Naive thymus-derived CD4-positive, alpha-beta T cell (primary cell): ENCODE measurements at regions of chr3 and their contacts with region 1.

Region 1: GRCh38 chr3:52056968-52057805 is 816 bp upstream of the DUSP7 start:
- DNase-seq: peak; percentile 90 to 100 (median 99)
- ATAC-seq: peak; percentile 93
- H3K4me3 ChIP-seq: peak overlapping the region; percentile 92
- H3K4me3 Mint-ChIP-seq: peak overlapping the region; percentile 90 to 97 (median 94)
- H3K27ac ChIP-seq: peak overlapping the region; percentile 79
- H3K27ac Mint-ChIP-seq: peak overlapping the region; percentile 78 to 97 (median 93)
- H3K4me1 ChIP-seq: peaks cover 34 to 35% of the 10 kb centered on the region in 2 donors
- H3K4me1 Mint-ChIP-seq: peaks cover 26 to 39% (median 26%) of the 10 kb centered on the region in 7 donors
- H3K27me3 ChIP-seq: no peaks in the 10 kb centered on the region
- H3K27me3 Mint-ChIP-seq: peaks cover 0 to 4% (median 0%) of the 10 kb centered on the region in 5 donors

Region 2: DNA sequence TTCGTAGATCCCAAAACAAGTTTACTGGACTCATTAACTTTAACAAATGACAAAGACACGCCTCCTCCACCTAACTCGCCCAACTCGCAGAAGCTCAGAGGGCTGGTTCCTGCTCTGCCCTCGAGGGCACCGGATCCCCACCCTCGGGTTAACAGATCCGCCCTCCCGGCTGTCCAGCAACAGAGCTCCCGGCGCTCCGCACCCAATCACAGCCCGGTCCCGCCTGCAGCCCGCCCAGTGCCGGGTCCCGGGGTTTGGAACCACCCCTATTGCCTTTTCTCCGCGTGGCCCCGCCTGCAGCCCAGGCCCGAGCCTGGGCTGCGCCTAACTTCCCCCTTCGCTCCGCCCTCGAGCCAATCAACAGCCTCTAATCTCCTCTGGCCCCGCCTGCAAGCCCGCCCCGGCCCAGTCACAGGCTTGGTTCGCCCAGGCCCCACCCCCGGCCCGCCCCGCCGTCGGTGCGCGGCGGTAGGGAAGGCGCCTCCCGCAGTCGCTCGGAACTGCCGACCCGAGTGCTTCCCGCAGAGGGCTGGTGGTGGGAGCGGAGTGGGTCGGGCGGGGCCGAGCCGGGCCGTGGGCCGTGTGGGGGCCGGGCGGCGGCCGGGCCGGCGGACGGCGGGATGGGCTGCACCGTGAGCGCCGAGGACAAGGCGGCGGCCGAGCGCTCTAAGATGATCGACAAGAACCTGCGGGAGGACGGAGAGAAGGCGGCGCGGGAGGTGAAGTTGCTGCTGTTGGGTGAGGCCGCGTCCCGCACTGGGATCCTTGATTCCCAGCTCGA is 1821.3 kb before region 1 on chr3 and contains the start of gene GNAI2:
- CTCF ChIA-PET with region 1: no interaction called
- POLR2A ChIA-PET with region 1: no interaction called
- intact Hi-C with region 1: loop called (anchors 2 to 5 kb)
- DNase-seq: peak; percentile 95 to 99 (median 99)
- ATAC-seq: peak; percentile 93
- H3K4me3 ChIP-seq: peak within 1 kb of the TSS; percentile 90
- H3K4me3 Mint-ChIP-seq: peak within 1 kb of the TSS; percentile 92 to 99 (median 98)
- H3K27ac ChIP-seq: peak within 1 kb of the TSS; percentile 84
- H3K27ac Mint-ChIP-seq: peak within 1 kb of the TSS; percentile 87 to 97 (median 95)
- H3K4me1 ChIP-seq: peaks cover 30 to 35% of the 10 kb centered on the region in 2 donors
- H3K4me1 Mint-ChIP-seq: peaks cover 12 to 41% (median 37%) of the 10 kb centered on the region in 7 donors
- H3K27me3 ChIP-seq: no peaks in the 10 kb centered on the region
- H3K27me3 Mint-ChIP-seq: no peaks in the 10 kb centered on the region
- total RNA-seq, gene GNAI2: 225 to 442 (median 282) TPM

Region 3: DNA sequence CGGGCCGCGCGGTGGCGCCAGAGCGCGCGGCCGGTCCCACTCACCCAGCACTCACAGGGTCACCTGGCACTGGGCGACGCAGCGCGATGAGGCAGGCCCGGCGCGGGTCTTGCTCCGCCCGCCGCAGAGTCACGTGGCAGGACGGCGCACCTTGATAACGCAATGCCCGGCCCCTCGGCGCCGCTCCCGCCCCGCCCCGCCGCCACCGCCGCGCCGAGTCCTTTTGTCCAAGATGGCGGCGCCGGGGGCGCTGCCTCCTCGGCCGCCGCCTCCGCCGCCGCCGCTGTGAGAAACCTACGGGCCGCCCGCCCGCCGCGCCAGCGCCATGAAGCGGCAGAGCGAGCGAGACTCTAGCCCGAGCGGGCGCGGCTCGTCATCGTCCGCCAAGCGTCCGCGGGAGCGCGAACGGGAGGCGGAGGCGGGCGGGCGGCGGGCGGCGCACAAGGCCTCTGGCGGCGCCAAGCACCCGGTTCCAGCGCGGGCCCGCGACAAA is 666.1 kb before region 1 on chr3 and contains the start of gene RBM15B:
- CTCF ChIA-PET with region 1: no interaction called
- POLR2A ChIA-PET with region 1: no interaction called
- intact Hi-C with region 1: loop called in 1 of 2 experiments (anchors 5 kb)
- DNase-seq: peak; percentile 94 to 98 (median 96)
- ATAC-seq: peak; percentile 95
- H3K4me3 ChIP-seq: peak within 1 kb of the TSS; percentile 52
- H3K4me3 Mint-ChIP-seq: peak within 1 kb of the TSS; percentile 76 to 89 (median 83)
- H3K27ac ChIP-seq: peak within 1 kb of the TSS; percentile 90
- H3K27ac Mint-ChIP-seq: peak within 1 kb of the TSS; percentile 79 to 91 (median 88)
- H3K4me1 ChIP-seq: peaks cover 46 to 53% of the 10 kb centered on the region in 2 donors
- H3K4me1 Mint-ChIP-seq: peaks cover 35 to 75% (median 67%) of the 10 kb centered on the region in 7 donors
- H3K27me3 ChIP-seq: no peaks in the 10 kb centered on the region
- H3K27me3 Mint-ChIP-seq: no peaks in the 10 kb centered on the region
- total RNA-seq, gene RBM15B: 29.9 to 40.6 (median 31.3) TPM

Region 4: DNA sequence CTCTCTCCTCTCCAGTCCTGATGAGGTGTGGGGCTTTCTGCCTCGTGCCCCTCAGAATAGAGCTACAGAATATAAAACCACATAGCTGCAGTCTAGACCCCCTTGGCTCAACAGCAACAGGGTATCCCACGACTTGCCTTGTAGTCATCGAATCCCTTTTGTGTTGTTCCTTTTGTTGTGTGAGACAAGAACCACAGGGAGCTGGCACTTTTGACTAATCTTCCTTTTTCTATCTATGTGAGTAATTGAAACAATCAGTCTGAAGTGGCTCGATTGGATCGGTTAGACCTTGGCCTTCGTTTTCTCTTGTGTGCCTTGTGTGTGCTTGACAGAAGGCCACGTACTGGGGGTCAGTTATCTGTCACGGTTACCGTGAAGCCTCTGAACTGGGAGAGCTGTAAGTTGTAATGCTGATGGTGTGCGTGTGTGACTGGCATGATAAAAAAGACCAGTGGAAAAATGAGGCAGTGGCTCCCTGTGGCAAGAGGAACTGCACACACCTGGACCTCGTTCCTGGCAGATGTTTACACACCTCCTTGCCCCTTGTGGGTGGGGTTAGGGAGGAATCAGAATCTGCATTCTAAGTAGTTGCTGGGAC is 255.0 kb before region 1 on chr3:
- CTCF ChIA-PET with region 1: no interaction called
- POLR2A ChIA-PET with region 1: no interaction called
- intact Hi-C with region 1: no loop called
- DNase-seq: no peak
- ATAC-seq: no peak
- H3K4me3 ChIP-seq: no peak overlapping the region
- H3K4me3 Mint-ChIP-seq: no peak overlapping the region
- H3K27ac ChIP-seq: no peak overlapping the region
- H3K27ac Mint-ChIP-seq: no peak overlapping the region
- H3K4me1 ChIP-seq: no peaks in the 10 kb centered on the region
- H3K4me1 Mint-ChIP-seq: peaks cover 4 to 39% (median 13%) of the 10 kb centered on the region in 7 donors
- H3K27me3 ChIP-seq: no peaks in the 10 kb centered on the region
- H3K27me3 Mint-ChIP-seq: peaks cover 3 to 10% (median 5%) of the 10 kb centered on the region in 5 donors

Region 5: DNA sequence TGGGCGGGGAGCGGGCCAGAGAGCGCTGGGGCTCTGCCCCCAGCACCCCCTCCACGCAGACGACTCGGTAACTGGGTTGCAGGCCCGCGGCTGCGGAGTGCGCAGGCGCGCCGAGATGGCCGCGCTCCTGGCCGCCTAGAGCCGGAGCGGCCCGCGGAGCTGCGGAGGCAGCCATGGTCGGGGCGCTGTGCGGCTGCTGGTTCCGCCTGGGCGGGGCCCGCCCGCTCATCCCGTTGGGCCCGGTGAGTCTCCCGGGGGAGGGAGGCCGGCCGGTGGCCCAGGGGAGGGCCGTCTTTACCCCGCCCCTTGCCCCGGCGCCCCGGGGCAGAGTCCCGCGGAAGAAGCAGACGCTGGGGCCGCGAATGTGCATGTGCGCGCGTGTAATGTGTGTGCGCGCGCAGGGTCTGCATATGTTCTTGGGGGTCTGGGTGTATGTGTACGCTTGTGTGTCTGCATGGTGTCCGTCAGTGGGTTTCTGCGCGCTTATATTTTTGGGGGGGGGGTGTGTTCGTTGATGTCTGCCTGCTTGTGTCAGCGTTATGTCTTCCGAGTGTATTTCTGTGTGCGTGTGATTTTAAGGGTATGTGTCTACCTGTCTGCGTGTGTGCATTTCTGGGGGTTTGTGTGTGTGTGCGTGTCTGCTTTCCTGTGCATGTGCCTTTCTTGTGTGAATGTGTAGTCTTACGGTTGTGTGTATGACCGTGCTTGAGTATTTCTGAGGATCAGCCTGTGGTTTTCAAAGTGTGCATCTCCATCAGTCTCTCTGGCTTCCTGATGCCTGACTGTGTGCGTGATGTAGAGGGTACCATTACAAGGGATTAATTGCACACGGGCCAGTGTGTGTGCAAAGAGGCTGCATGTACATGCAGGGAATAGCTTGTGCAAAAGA is 82.0 kb before region 1 on chr3 and contains the start of gene ABHD14A:
- CTCF ChIA-PET with region 1: no interaction called
- POLR2A ChIA-PET with region 1: interaction called, 8 read pairs
- intact Hi-C with region 1: loop called (anchors 1 kb)
- DNase-seq: peak; percentile 68 to 85 (median 73)
- ATAC-seq: peak; percentile 80
- H3K4me3 ChIP-seq: peak within 1 kb of the TSS; percentile 82
- H3K4me3 Mint-ChIP-seq: peak within 1 kb of the TSS; percentile 83 to 100 (median 94)
- H3K27ac ChIP-seq: peak within 1 kb of the TSS; percentile 77
- H3K27ac Mint-ChIP-seq: peak within 1 kb of the TSS; percentile 88 to 97 (median 92)
- H3K4me1 ChIP-seq: peaks cover 9 to 21% of the 10 kb centered on the region in 2 donors
- H3K4me1 Mint-ChIP-seq: peaks cover 26 to 53% (median 32%) of the 10 kb centered on the region in 7 donors
- H3K27me3 ChIP-seq: no peaks in the 10 kb centered on the region
- H3K27me3 Mint-ChIP-seq: no peaks in the 10 kb centered on the region
- total RNA-seq, gene ABHD14A: 9.9 to 23.7 (median 14.7) TPM

Region 6: GRCh38 chr3:52123106-52123725 is 66.0 kb after region 1 on chr3:
- CTCF ChIA-PET with region 1: interaction called, 17 read pairs
- POLR2A ChIA-PET with region 1: interaction called, 7 read pairs
- intact Hi-C with region 1: loop called (anchors 1 to 5 kb)
- DNase-seq: peak; percentile 51 to 84 (median 70)
- ATAC-seq: peak; percentile 86
- H3K4me3 ChIP-seq: no peak overlapping the region
- H3K4me3 Mint-ChIP-seq: no peak overlapping the region
- H3K27ac ChIP-seq: no peak overlapping the region
- H3K27ac Mint-ChIP-seq: no peak overlapping the region
- H3K4me1 ChIP-seq: no peaks in the 10 kb centered on the region
- H3K4me1 Mint-ChIP-seq: peaks cover 0 to 28% (median 0%) of the 10 kb centered on the region in 7 donors
- H3K27me3 ChIP-seq: no peaks in the 10 kb centered on the region
- H3K27me3 Mint-ChIP-seq: no peaks in the 10 kb centered on the region

Region 7: DNA sequence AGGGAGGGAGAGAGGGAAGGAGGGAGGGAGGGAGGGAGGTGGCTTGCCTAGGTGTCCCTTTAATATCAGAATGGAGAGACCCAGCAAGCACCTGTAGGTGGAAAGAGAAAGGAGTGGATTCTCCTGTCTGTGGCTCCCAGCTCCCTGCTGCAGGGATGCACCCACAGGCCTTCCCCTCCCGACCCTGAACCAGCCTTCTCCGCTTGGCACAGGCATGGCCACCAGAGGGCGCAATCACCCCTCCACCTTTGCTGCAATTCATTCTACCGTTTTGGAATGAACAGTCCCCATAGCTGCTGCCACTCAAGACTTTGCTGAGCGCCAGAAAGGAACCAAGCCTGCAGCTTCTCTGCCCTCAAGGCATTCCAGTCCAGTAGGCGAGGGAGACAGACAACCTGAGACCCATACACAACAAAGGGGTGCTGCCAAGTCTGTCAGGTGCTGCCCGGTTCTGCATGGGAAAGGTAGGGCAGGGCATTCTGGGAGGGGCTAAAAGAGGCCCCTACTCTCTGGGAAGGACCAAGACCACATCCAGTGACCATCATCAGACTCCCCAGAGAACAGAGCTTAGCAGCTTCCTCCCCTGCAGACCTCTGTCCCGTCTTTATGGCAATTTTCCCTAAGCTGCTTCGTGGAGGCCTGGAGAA is 163.3 kb after region 1 on chr3:
- CTCF ChIA-PET with region 1: no interaction called
- POLR2A ChIA-PET with region 1: interaction called, 4 read pairs
- intact Hi-C with region 1: loop called in 1 of 2 experiments (anchors 2 kb)
- DNase-seq: peak; percentile 75 to 90 (median 83)
- ATAC-seq: peak; percentile 88
- H3K4me3 ChIP-seq: peak overlapping the region; percentile 28
- H3K4me3 Mint-ChIP-seq: peak overlapping the region; percentile 39 to 77 (median 64)
- H3K27ac ChIP-seq: no peak overlapping the region
- H3K27ac Mint-ChIP-seq: peak overlapping the region; percentile 65 to 90 (median 77)
- H3K4me1 ChIP-seq: peaks cover 76 to 88% of the 10 kb centered on the region in 2 donors
- H3K4me1 Mint-ChIP-seq: peaks cover 65 to 95% (median 80%) of the 10 kb centered on the region in 7 donors
- H3K27me3 ChIP-seq: no peaks in the 10 kb centered on the region
- H3K27me3 Mint-ChIP-seq: no peaks in the 10 kb centered on the region

Region 8: DNA sequence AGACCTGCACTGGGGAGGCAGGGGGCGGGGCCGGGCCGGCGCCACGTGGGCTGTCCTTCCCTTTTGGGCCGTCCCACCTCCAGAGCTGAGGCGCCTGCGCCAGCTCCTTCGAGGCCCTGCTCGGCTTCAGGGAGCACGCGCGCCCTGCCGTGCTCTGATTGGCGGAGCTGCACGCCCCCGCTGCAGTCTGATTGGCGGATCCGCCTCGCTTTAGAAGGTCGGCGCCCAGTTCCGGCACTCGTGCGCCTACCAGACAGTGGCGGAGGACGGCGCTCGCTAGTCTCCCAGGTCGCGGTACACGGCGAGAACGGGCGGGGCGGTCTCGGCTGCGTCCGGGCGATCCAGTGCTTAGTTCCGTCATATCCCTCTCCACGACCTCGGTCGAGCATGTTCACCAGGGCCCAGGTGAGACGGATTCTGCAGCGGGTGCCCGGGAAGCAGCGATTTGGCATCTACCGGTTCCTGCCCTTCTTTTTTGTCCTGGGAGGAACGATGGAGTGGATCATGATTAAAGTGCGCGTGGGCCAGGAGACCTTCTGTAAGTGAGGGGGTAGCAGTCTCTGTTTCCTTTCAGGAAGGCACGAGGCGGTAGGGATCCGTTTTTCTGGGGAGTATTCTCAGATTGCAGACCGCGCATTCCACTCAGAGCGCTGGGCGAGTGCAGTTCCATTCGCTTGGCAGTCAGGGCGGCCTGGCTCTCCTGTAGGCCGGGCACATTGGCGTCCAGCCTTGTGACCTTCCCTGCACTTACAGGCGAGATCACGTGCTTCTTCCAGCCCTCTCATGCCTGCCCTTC is 479.4 kb after region 1 on chr3 and contains the start of gene UQCC5:
- CTCF ChIA-PET with region 1: no interaction called
- POLR2A ChIA-PET with region 1: no interaction called
- intact Hi-C with region 1: loop called in 1 of 2 experiments (anchors 1 kb)
- DNase-seq: peak; percentile 89 to 98 (median 97)
- ATAC-seq: peak; percentile 95
- H3K4me3 ChIP-seq: peak within 1 kb of the TSS; percentile 67
- H3K4me3 Mint-ChIP-seq: peak within 1 kb of the TSS; percentile 96 to 100 (median 99)
- H3K27ac ChIP-seq: peak within 1 kb of the TSS; percentile 85
- H3K27ac Mint-ChIP-seq: peak within 1 kb of the TSS; percentile 96 to 99 (median 98)
- H3K4me1 ChIP-seq: peaks cover 24 to 30% of the 10 kb centered on the region in 2 donors
- H3K4me1 Mint-ChIP-seq: peaks cover 29 to 66% (median 50%) of the 10 kb centered on the region in 7 donors
- H3K27me3 ChIP-seq: no peaks in the 10 kb centered on the region
- H3K27me3 Mint-ChIP-seq: no peaks in the 10 kb centered on the region
- total RNA-seq, gene UQCC5: 5.4 to 11.9 (median 10.7) TPM